T-cell (primary cell): ENCODE measurements at regions of chr16 and their contacts with region 1.

Region 1: GRCh38 chr16:84553873-84554399 is 49.5 kb upstream of the MEAK7 start:
- DNase-seq: peak in 33 of 35 experiments; percentile 15 to 78 (median 57)
- ATAC-seq: peak; percentile 62 to 78 (median 67)
- H3K4me3 ChIP-seq: peak overlapping the region; percentile 43 to 53
- H3K4me3 Mint-ChIP-seq: peak overlapping the region; percentile 82 to 91 (median 84)
- H3K27ac ChIP-seq: peak overlapping the region; percentile 48
- H3K27ac Mint-ChIP-seq: peak overlapping the region; percentile 97 to 100
- H3K4me1 ChIP-seq: peaks cover 47 to 65% of the 10 kb centered on the region in 2 experiments
- H3K4me1 Mint-ChIP-seq: peaks cover 60 to 63% (median 60%) of the 10 kb centered on the region in 3 donors
- H3K27me3 ChIP-seq: no peaks in the 10 kb centered on the region
- H3K27me3 Mint-ChIP-seq: no peaks in the 10 kb centered on the region

Region 2: GRCh38 chr16:84096115-84097012 is 457.6 kb before region 1 on chr16:
- CTCF ChIA-PET with region 1: interaction called in 1 of 2 experiments, 11 read pairs
- POLR2A ChIA-PET with region 1: no interaction called
- DNase-seq: no peak
- ATAC-seq: no peak
- H3K4me3 ChIP-seq: no peak overlapping the region
- H3K4me3 Mint-ChIP-seq: no peak overlapping the region
- H3K27ac ChIP-seq: no peak overlapping the region
- H3K27ac Mint-ChIP-seq: no peak overlapping the region
- H3K4me1 ChIP-seq: peaks cover 0 to 2% of the 10 kb centered on the region in 2 experiments
- H3K4me1 Mint-ChIP-seq: peaks cover 0 to 12% (median 12%) of the 10 kb centered on the region in 3 donors
- H3K27me3 ChIP-seq: no peaks in the 10 kb centered on the region
- H3K27me3 Mint-ChIP-seq: no peaks in the 10 kb centered on the region

Region 3: GRCh38 chr16:84511180-84511824 is 42.6 kb before region 1 on chr16:
- CTCF ChIA-PET with region 1: interaction called, 5 to 6 read pairs
- POLR2A ChIA-PET with region 1: interaction called in 1 of 2 experiments, 12 read pairs
- DNase-seq: peak; percentile 48 to 93 (median 81)
- ATAC-seq: peak; percentile 14 to 22 (median 19)
- H3K4me3 ChIP-seq: no peak overlapping the region
- H3K4me3 Mint-ChIP-seq: no peak overlapping the region
- H3K27ac ChIP-seq: no peak overlapping the region
- H3K27ac Mint-ChIP-seq: peak overlapping the region; percentile 78 to 89
- H3K4me1 ChIP-seq: peaks cover 49 to 86% of the 10 kb centered on the region in 2 experiments
- H3K4me1 Mint-ChIP-seq: peaks cover 65 to 72% (median 70%) of the 10 kb centered on the region in 3 donors
- H3K27me3 ChIP-seq: no peaks in the 10 kb centered on the region
- H3K27me3 Mint-ChIP-seq: no peaks in the 10 kb centered on the region

Region 4: DNA sequence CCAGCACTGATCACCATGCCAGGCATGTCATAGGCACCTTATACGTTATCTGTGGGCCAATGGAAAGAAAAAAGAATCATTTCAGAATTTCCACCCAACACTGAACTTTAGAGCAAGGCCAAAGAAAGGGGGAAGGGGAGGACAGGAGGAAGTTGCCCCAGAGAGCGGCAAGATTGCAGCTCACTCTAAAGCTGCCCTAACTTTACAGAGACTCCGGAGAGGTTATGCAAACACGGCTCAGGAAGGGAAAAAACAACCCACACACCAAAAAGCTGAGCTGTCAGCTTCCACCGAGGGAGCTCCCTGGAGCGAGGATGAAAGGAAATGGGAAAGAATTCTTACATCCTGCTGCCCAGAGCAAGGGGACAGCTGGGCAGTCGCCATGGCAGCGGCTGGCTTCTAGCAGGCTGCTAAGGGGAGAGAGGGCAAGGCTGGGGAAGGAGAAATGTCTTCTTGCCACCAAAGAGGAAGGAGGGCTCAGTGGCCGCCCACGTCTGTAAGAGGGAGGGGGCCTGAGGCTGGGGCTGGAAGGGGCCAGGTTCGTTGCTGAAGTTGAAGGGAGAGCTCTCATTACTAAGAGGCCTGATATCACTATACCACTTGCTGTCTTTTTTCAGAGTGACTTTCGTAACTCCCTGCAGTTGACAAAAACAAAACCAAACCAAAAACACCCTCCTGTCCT is 45.7 kb after region 1 on chr16:
- CTCF ChIA-PET with region 1: interaction called in 1 of 2 experiments, 7 read pairs
- POLR2A ChIA-PET with region 1: interaction called, 3 to 17 read pairs
- DNase-seq: peak in 18 of 35 experiments; percentile 29 to 65 (median 40)
- ATAC-seq: peak; percentile 14 to 43 (median 36)
- H3K4me3 ChIP-seq: peak overlapping the region; percentile 48 to 66
- H3K4me3 Mint-ChIP-seq: peak overlapping the region; percentile 82 to 85 (median 84)
- H3K27ac ChIP-seq: peak overlapping the region; percentile 93
- H3K27ac Mint-ChIP-seq: peak overlapping the region; percentile 99
- H3K4me1 ChIP-seq: peaks cover 72 to 98% of the 10 kb centered on the region in 2 experiments
- H3K4me1 Mint-ChIP-seq: peaks cover 88 to 93% (median 90%) of the 10 kb centered on the region in 3 donors
- H3K27me3 ChIP-seq: peaks cover 0 to 7% of the 10 kb centered on the region in 2 experiments
- H3K27me3 Mint-ChIP-seq: no peaks in the 10 kb centered on the region

Region 5: DNA sequence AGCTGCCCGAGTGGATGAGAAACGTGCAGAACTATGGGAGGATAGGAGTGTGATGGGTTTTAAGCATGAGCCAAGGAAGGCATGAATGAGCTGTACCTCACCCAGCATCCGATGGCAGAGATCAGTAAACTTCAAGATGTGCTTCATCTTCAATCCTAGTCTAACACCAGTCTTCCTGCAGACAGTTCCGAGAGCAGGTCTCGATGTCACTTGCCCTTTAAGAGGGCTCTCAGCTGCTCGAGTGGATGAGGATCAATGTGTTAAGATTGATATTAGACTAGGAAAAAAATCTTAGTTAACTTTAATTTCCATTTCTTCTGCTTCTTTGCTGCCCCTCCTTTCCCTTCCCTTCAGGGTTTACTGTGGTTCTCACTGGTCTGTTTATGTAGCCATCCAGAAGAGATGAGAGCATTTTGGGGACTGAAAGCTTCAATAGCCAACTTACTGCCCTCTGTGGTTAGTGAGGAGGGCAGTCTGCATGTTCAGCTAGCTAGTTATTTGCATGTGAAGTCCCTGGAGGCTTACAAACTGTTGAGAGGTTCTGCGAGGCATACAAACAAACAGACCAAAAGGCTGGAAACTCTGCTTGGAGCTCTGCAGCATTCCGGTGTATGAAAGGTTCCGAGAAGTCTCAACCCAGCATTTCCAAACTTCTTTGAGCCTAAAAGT is 109.6 kb after region 1 on chr16:
- CTCF ChIA-PET with region 1: no interaction called
- POLR2A ChIA-PET with region 1: no interaction called
- DNase-seq: no peak
- ATAC-seq: no peak
- H3K4me3 ChIP-seq: no peak overlapping the region
- H3K4me3 Mint-ChIP-seq: no peak overlapping the region
- H3K27ac ChIP-seq: no peak overlapping the region
- H3K27ac Mint-ChIP-seq: no peak overlapping the region
- H3K4me1 ChIP-seq: peaks cover 0 to 10% of the 10 kb centered on the region in 2 experiments
- H3K4me1 Mint-ChIP-seq: peaks cover 13 to 32% (median 20%) of the 10 kb centered on the region in 3 donors
- H3K27me3 ChIP-seq: no peaks in the 10 kb centered on the region
- H3K27me3 Mint-ChIP-seq: no peaks in the 10 kb centered on the region